HCT116 (cell line): ENCODE measurements at regions of chr7 and their contacts with region 1.

Region 1: DNA sequence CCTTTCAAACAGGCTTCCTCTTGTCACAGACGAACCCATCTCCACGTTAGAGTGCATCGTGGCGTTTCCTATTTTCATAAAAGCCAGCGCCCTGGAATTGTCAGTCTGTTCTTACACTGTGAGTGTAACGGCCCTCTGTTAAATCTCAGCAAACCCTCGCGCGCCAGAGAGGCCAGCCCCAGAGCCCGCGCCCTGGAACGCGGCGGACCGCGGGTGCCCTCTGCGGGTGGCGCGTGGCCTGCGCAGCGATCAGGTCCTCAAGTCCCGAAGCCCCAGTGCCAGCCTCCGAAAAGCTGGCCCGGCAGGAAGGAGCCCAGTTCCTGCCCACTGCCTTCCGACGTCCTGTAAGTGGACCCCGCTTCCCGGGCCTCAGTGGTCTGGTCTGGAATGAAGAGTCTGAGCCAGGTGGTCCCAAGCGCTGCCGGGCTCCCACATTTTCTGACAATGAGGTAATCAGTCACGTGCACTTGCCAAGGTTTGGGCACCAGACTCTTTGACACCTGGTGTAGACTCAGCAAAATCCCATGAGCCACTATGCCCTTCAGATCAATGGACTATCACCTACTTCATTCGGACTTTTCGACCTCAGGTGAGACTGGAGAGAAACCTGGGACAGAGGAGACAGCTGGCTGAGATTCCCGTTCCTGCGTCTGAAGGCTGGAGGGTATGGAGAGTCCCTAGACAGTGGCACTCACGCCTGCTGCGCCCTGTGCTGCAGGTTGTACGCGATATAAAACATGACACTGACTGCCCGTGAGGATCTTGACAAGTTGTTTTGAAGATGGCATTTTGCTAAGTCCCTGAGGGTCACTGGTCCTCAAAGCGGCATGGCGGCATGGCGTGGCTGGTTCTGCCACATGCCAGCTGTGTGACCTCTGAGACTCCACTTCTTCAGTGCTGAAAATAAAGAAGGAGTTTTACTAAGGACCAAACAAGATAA is 109.4 kb upstream of the LANCL2 start:
- DNase-seq: peak; percentile 60
- ATAC-seq: peak; percentile 86
- H3K4me3 ChIP-seq: peak overlapping the region; percentile 44 to 62
- H3K27ac ChIP-seq: no peak overlapping the region
- H3K4me1 ChIP-seq: peaks cover 2 to 17% of the 10 kb centered on the region in 2 experiments; a peak in 2 of 4 replicates
- H3K27me3 ChIP-seq: no peaks in the 10 kb centered on the region
- CTCF ChIP-seq: peak; percentile 86 to 95 (median 90)
- POLR2A ChIP-seq: no peak
- RAD21 ChIP-seq: peak; percentile 95

Region 2: GRCh38 chr7:54773472-54774399 is 482.0 kb before region 1 on chr7:
- CTCF ChIA-PET with region 1: interaction called, 88 read pairs
- POLR2A ChIA-PET with region 1: interaction called, 5 read pairs
- RAD21 ChIA-PET with region 1: interaction called, 5 read pairs
- intact Hi-C with region 1: loop called (anchors 1 kb)
- DNase-seq: peak; percentile 91
- ATAC-seq: peak; percentile 89
- H3K4me3 ChIP-seq: peak overlapping the region; percentile 8 to 47
- H3K27ac ChIP-seq: peak overlapping the region; percentile 37; the same call in 1 of the 2 replicates
- H3K4me1 ChIP-seq: peaks cover 11 to 29% of the 10 kb centered on the region in 2 experiments
- H3K27me3 ChIP-seq: no peaks in the 10 kb centered on the region
- CTCF ChIP-seq: peak; percentile 79 to 93 (median 88)
- POLR2A ChIP-seq: no peak
- RAD21 ChIP-seq: peak; percentile 94

Region 3: GRCh38 chr7:54839538-54840213 is 416.1 kb before region 1 on chr7:
- CTCF ChIA-PET with region 1: interaction called, 17 read pairs
- POLR2A ChIA-PET with region 1: no interaction called
- RAD21 ChIA-PET with region 1: interaction called, 3 read pairs
- intact Hi-C with region 1: loop called (anchors 1 kb)
- DNase-seq: peak; percentile 51
- ATAC-seq: peak; percentile 97
- H3K4me3 ChIP-seq: no peak overlapping the region
- H3K27ac ChIP-seq: no peak overlapping the region
- H3K4me1 ChIP-seq: peaks cover 6 to 32% of the 10 kb centered on the region in 2 experiments
- H3K27me3 ChIP-seq: no peaks in the 10 kb centered on the region
- CTCF ChIP-seq: peak; percentile 82 to 94 (median 92)
- POLR2A ChIP-seq: no peak
- RAD21 ChIP-seq: peak; percentile 97

Region 4: GRCh38 chr7:55018361-55019190 is 237.2 kb before region 1 on chr7 and contains the start of gene EGFR:
- CTCF ChIA-PET with region 1: interaction called, 3 read pairs
- POLR2A ChIA-PET with region 1: no interaction called
- RAD21 ChIA-PET with region 1: interaction called in 1 of 2 experiments, 3 read pairs
- intact Hi-C with region 1: loop called (anchors 10 kb)
- DNase-seq: peak; percentile 40
- ATAC-seq: peak; percentile 89
- H3K4me3 ChIP-seq: peak within 1 kb of the TSS; percentile 58 to 76
- H3K27ac ChIP-seq: peak within 1 kb of the TSS; percentile 88
- H3K4me1 ChIP-seq: peaks cover 12 to 17% of the 10 kb centered on the region in 2 experiments
- H3K27me3 ChIP-seq: no peaks in the 10 kb centered on the region
- CTCF ChIP-seq: no peak
- POLR2A ChIP-seq: no peak
- RAD21 ChIP-seq: no peak
- total RNA-seq, gene EGFR: 71.5 TPM

Region 5: GRCh38 chr7:55271069-55271626 is 15.4 kb after region 1 on chr7:
- CTCF ChIA-PET with region 1: interaction called, 15 read pairs
- POLR2A ChIA-PET with region 1: no interaction called
- RAD21 ChIA-PET with region 1: no interaction called
- intact Hi-C with region 1: no loop called
- DNase-seq: no peak
- ATAC-seq: peak; percentile 71
- H3K4me3 ChIP-seq: no peak overlapping the region
- H3K27ac ChIP-seq: no peak overlapping the region
- H3K4me1 ChIP-seq: no peaks in the 10 kb centered on the region
- H3K27me3 ChIP-seq: no peaks in the 10 kb centered on the region
- CTCF ChIP-seq: peak; percentile 46 to 66 (median 63); a peak in 5 of 6 replicates
- POLR2A ChIP-seq: no peak
- RAD21 ChIP-seq: peak; percentile 70

Region 6: DNA sequence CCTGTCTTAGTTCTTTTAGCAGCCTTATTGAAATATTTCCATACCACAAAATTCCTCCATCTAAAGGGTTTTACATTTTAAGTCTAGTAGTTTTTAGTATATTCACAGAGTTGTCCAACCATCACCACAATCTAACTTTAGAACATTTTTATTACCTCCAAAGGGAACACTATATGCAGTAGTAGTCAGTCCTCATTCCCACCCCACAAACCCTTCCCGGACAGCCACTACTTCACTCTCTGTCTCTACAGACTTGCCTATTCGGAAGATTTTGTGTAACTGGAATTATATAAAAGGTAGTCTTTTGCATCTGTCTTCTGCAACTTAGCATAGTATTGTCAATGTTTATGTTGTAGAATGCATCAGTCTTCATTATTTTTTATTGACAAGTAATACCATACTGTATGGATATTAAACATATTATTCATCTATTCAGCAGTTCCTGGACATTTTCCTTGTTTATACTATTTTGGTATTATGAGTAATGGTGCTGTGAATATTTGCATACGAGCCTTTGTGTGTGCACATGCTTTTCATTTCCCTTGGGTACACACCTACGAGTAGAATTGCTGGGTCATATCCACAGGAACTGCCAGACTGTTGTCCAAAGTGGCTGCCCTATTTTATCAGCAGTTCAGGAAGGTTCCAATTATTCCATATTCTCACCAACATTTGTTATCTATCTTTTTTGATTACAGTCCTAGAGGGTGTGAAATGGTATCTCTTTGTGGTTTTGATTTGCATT is 48.4 kb after region 1 on chr7:
- CTCF ChIA-PET with region 1: no interaction called
- POLR2A ChIA-PET with region 1: no interaction called
- RAD21 ChIA-PET with region 1: no interaction called
- intact Hi-C with region 1: no loop called
- DNase-seq: no peak
- ATAC-seq: no peak
- H3K4me3 ChIP-seq: no peak overlapping the region
- H3K27ac ChIP-seq: no peak overlapping the region
- H3K4me1 ChIP-seq: no peaks in the 10 kb centered on the region
- H3K27me3 ChIP-seq: peaks cover 20% of the 10 kb centered on the region
- CTCF ChIP-seq: no peak
- POLR2A ChIP-seq: no peak
- RAD21 ChIP-seq: no peak